HCT116 (cell line): ENCODE measurements at regions of chr14 and their contacts with region 1.

Region 1: GRCh38 chr14:61837336-61838229 is 75.4 kb downstream of the SNAPC1 start:
- DNase-seq: peak; percentile 80
- ATAC-seq: peak; percentile 98
- H3K4me3 ChIP-seq: no peak overlapping the region
- H3K27ac ChIP-seq: no peak overlapping the region
- H3K4me1 ChIP-seq: no peaks in the 10 kb centered on the region
- H3K27me3 ChIP-seq: no peaks in the 10 kb centered on the region
- CTCF ChIP-seq: peak; percentile 78 to 96 (median 84); a peak in 5 of 6 replicates
- POLR2A ChIP-seq: no peak
- RAD21 ChIP-seq: peak; percentile 95

Region 2: DNA sequence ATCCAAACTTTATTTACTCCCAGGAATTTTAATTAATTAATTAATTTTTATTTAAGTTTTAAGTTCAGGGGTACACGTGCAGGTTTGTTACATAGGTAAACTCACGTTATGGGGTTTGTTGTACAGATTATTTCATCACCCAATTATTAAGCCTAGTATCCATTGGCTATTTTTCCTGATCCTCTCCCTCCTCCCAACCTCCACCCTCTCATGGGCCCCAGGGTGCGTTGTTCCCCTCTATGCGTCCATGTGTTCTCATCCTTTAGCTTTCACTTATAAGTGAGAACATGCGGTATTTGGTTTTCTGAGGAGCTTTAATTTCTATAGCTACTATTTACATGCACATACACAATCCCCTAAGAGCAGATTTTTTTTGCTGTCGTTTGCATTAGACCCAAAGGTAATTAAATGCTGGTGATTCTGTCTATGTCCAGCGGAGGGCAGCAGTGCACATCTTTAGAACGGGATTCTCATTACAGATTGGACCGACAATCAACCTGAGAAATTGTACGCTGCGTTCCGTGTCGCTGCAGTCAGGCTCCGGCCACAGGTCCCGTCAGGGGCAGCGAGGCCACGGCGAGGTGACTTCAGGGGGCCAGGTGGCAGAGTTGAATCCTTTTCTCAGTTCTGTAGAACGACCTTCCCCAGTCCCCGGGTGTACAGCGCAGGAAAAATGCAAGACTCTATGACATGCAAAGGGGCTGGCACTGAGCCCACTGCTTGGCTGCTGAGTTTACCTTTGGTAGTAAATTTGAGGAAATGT is 568.1 kb before region 1 on chr14:
- CTCF ChIA-PET with region 1: interaction called, 4 read pairs
- POLR2A ChIA-PET with region 1: no interaction called
- RAD21 ChIA-PET with region 1: no interaction called
- intact Hi-C with region 1: loop called (anchors 10 kb)
- DNase-seq: peak; percentile 79
- ATAC-seq: peak; percentile 95
- H3K4me3 ChIP-seq: peak overlapping the region; percentile 33 to 55
- H3K27ac ChIP-seq: no peak overlapping the region
- H3K4me1 ChIP-seq: peaks cover 0 to 4% of the 10 kb centered on the region in 2 experiments; a peak in 1 of 4 replicates
- H3K27me3 ChIP-seq: no peaks in the 10 kb centered on the region
- CTCF ChIP-seq: peak; percentile 63 to 78 (median 70)
- POLR2A ChIP-seq: no peak
- RAD21 ChIP-seq: peak; percentile 77

Region 3: GRCh38 chr14:61456720-61457119 is 380.9 kb before region 1 on chr14:
- CTCF ChIA-PET with region 1: interaction called, 12 read pairs
- POLR2A ChIA-PET with region 1: no interaction called
- RAD21 ChIA-PET with region 1: interaction called in 1 of 2 experiments, 6 read pairs
- intact Hi-C with region 1: loop called (anchors 1 kb)
- DNase-seq: peak; percentile 44
- ATAC-seq: peak; percentile 93
- H3K4me3 ChIP-seq: no peak overlapping the region
- H3K27ac ChIP-seq: no peak overlapping the region
- H3K4me1 ChIP-seq: peaks cover 0 to 7% of the 10 kb centered on the region in 2 experiments; a peak in 2 of 4 replicates
- H3K27me3 ChIP-seq: no peaks in the 10 kb centered on the region
- CTCF ChIP-seq: peak; percentile 57 to 83 (median 83); a peak in 5 of 6 replicates
- POLR2A ChIP-seq: no peak
- RAD21 ChIP-seq: peak; percentile 75

Region 4: GRCh38 chr14:61475316-61475715 is 362.3 kb before region 1 on chr14:
- CTCF ChIA-PET with region 1: interaction called, 19 read pairs
- POLR2A ChIA-PET with region 1: no interaction called
- RAD21 ChIA-PET with region 1: interaction called in 1 of 2 experiments, 4 read pairs
- intact Hi-C with region 1: loop called (anchors 5 kb)
- DNase-seq: peak; percentile 56
- ATAC-seq: peak; percentile 62
- H3K4me3 ChIP-seq: no peak overlapping the region
- H3K27ac ChIP-seq: no peak overlapping the region
- H3K4me1 ChIP-seq: peaks cover 47 to 54% of the 10 kb centered on the region in 2 experiments
- H3K27me3 ChIP-seq: no peaks in the 10 kb centered on the region
- CTCF ChIP-seq: peak; percentile 56 to 89 (median 65); a peak in 5 of 6 replicates
- POLR2A ChIP-seq: no peak
- RAD21 ChIP-seq: peak; percentile 85

Region 5: GRCh38 chr14:61750708-61751474 is 86.7 kb before region 1 on chr14:
- CTCF ChIA-PET with region 1: interaction called, 11 read pairs
- POLR2A ChIA-PET with region 1: no interaction called
- RAD21 ChIA-PET with region 1: no interaction called
- intact Hi-C with region 1: loop called (anchors 5 kb)
- DNase-seq: peak; percentile 70
- ATAC-seq: peak; percentile 96
- H3K4me3 ChIP-seq: peak overlapping the region; percentile 62
- H3K27ac ChIP-seq: peak overlapping the region; percentile 59; the same call in 1 of the 2 replicates
- H3K4me1 ChIP-seq: peaks cover 8 to 38% of the 10 kb centered on the region in 2 experiments; a peak in 3 of 4 replicates
- H3K27me3 ChIP-seq: no peaks in the 10 kb centered on the region
- CTCF ChIP-seq: no peak
- POLR2A ChIP-seq: peak; percentile 74
- RAD21 ChIP-seq: no peak

Region 6: DNA sequence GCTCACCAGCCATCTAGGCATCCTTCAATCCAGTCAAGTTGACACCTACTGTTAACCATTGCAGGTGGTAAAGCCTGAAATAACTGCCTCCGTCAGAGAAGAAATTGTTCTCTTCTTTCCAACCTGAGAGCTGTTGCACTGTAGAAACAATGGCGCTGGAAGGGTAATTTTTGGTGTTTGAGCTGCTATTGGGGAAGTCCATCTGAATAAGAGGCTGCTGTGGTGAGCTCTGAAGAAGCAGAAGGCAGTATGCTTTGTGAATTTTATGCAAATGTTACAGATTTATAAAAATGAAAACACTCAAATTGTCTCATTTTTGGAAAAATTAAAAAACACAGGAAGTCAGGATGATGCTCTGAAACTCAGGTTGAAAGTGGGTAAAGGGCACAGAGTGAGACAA is 15.1 kb before region 1 on chr14:
- CTCF ChIA-PET with region 1: no interaction called
- POLR2A ChIA-PET with region 1: no interaction called
- RAD21 ChIA-PET with region 1: no interaction called
- intact Hi-C with region 1: no loop called
- DNase-seq: no peak
- ATAC-seq: no peak
- H3K4me3 ChIP-seq: no peak overlapping the region
- H3K27ac ChIP-seq: no peak overlapping the region
- H3K4me1 ChIP-seq: no peaks in the 10 kb centered on the region
- H3K27me3 ChIP-seq: no peaks in the 10 kb centered on the region
- CTCF ChIP-seq: no peak
- POLR2A ChIP-seq: no peak
- RAD21 ChIP-seq: no peak

Region 7: DNA sequence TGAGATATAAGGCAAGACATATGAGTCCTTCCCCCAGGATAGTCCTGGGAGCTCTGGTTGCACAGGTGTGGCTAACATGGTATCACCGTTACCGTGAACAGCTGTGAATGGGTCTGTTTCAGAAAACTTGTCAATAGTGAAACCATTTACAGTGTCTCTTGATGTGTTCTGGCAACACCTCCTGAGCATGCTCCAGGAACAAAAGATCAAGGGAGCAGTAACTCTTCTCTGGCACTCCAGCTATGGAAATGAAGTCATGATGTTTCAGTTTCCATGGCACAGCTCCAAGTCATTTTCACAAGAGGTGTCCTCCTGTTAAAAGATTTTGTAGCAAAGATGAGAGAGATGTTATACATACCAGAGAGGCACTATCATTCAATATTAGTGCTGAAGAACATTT is 178.4 kb after region 1 on chr14:
- CTCF ChIA-PET with region 1: no interaction called
- POLR2A ChIA-PET with region 1: no interaction called
- RAD21 ChIA-PET with region 1: no interaction called
- intact Hi-C with region 1: no loop called
- DNase-seq: no peak
- ATAC-seq: no peak
- H3K4me3 ChIP-seq: no peak overlapping the region
- H3K27ac ChIP-seq: no peak overlapping the region
- H3K4me1 ChIP-seq: no peaks in the 10 kb centered on the region
- H3K27me3 ChIP-seq: peaks cover 47% of the 10 kb centered on the region
- CTCF ChIP-seq: no peak
- POLR2A ChIP-seq: no peak
- RAD21 ChIP-seq: no peak

Region 8: DNA sequence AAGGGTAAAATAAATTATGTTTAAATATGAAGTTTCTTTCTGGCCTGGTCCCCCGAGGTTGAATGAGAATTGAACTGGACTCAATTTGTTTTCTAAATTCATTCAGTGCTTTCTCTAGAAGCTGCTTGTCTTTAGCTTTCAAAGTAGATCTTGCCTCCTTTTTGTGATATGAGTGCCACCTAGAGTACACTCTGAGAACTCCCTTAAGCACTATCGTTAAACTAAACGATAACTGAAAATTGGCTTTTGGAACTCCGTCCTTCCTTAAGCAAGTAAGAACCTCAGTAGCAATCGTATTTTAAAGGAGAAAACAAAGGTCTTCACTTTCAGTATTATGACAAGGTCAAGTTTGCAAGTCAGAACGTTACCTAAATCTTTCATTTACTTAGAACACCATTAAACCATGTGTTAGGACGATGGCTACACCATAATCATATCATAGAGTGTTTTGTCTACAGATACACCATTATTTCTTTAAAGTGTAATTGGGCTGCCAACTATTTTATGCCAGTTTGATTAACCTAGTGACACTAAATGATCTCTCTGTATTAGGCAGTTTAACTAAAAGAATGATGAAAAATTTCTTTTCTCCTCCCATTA is 289.4 kb after region 1 on chr14:
- CTCF ChIA-PET with region 1: interaction called, 17 read pairs
- POLR2A ChIA-PET with region 1: no interaction called
- RAD21 ChIA-PET with region 1: no interaction called
- intact Hi-C with region 1: no loop called
- DNase-seq: peak; percentile 40
- ATAC-seq: peak; percentile 81
- H3K4me3 ChIP-seq: no peak overlapping the region
- H3K27ac ChIP-seq: no peak overlapping the region
- H3K4me1 ChIP-seq: no peaks in the 10 kb centered on the region
- H3K27me3 ChIP-seq: peaks cover 16% of the 10 kb centered on the region
- CTCF ChIP-seq: peak; percentile 58 to 76 (median 66)
- POLR2A ChIP-seq: no peak
- RAD21 ChIP-seq: peak; percentile 67